ENCODE measurements at regions of chr5 and their contacts with region 1.

Region 1: GRCh38 chr5:23139338-23140171 is 286.4 kb upstream of the CDH12 start:
- DNase-seq: peak; percentile 7
- H3K4me3 ChIP-seq: no peak overlapping the region
- H3K27ac ChIP-seq: no peak overlapping the region
- H3K4me1 ChIP-seq: no peaks in the 10 kb centered on the region
- H3K27me3 ChIP-seq: no peaks in the 10 kb centered on the region
- CTCF ChIP-seq: peak; percentile 49 to 69

Region 2: GRCh38 chr5:21817668-21818369 is 1321.7 kb before region 1 on chr5:
- CTCF ChIA-PET with region 1: no interaction called
- dilution Hi-C with region 1: no loop called
- in situ Hi-C with region 1: no loop called
- intact Hi-C with region 1: loop called (anchors 5 kb)
- DNase-seq: no peak
- H3K4me3 ChIP-seq: no peak overlapping the region
- H3K27ac ChIP-seq: no peak overlapping the region
- H3K4me1 ChIP-seq: no peaks in the 10 kb centered on the region
- H3K27me3 ChIP-seq: no peaks in the 10 kb centered on the region
- CTCF ChIP-seq: peak; percentile 29 to 44

Region 3: GRCh38 chr5:22889718-22890117 is 249.8 kb before region 1 on chr5:
- CTCF ChIA-PET with region 1: no interaction called
- dilution Hi-C with region 1: no loop called
- in situ Hi-C with region 1: loop called in 1 of 2 experiments (anchors 25 kb)
- intact Hi-C with region 1: loop called (anchors 2 kb)
- DNase-seq: no peak
- H3K4me3 ChIP-seq: no peak overlapping the region
- H3K27ac ChIP-seq: no peak overlapping the region
- H3K4me1 ChIP-seq: peaks cover 5% of the 10 kb centered on the region
- H3K27me3 ChIP-seq: no peaks in the 10 kb centered on the region
- CTCF ChIP-seq: peak; percentile 28 to 50

Measured in mammary epithelial cell (primary cell).